Posterior vena cava (tissue), 2 donors: ENCODE measurements at regions of chr4 and their contacts with region 1.

Region 1: DNA sequence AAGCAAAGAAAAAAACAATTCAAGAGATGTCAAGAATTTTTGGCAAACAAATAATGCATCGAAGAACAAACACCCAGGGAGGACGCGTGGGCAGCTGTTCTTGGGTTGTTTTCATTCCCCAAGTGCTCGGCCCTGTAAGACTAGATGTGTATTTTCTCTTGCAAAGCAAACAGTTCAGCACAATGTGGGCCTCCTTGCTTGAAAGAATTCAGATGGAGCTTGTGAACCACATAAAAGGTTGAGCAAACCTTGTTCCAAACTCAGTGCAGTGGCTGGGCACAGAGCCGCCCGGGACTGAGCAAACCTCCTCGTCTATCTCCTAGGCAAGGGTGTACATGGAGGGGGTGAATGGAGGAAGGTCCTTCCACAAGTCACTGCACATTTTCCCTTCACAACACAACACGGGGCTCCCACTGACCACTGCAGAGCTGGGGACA is 82.4 kb downstream of the HTRA3 start:
- DNase-seq: peak; percentile 68

Region 2: GRCh38 chr4:7705062-7705461 is 646.9 kb before region 1 on chr4:
- intact Hi-C with region 1: no loop called
- DNase-seq: no peak

Region 3: GRCh38 chr4:8117278-8117682 is 234.7 kb before region 1 on chr4:
- intact Hi-C with region 1: no loop called
- DNase-seq: no peak

Region 4: GRCh38 chr4:8384397-8385060 is 32.6 kb after region 1 on chr4:
- intact Hi-C with region 1: loop called in 1 of 2 experiments (anchors 5 kb)
- DNase-seq: peak; percentile 51

Region 5: GRCh38 chr4:8744083-8744805 is 392.3 kb after region 1 on chr4:
- intact Hi-C with region 1: no loop called
- DNase-seq: peak; percentile 68